GM10248 (cell line): ENCODE measurements at regions of chr12 and their contacts with region 1.

Region 1: GRCh38 chr12:110431957-110432587 is 18.1 kb downstream of the ARPC3 start:
- DNase-seq: no peak
- CTCF ChIP-seq: no peak

Region 2: DNA sequence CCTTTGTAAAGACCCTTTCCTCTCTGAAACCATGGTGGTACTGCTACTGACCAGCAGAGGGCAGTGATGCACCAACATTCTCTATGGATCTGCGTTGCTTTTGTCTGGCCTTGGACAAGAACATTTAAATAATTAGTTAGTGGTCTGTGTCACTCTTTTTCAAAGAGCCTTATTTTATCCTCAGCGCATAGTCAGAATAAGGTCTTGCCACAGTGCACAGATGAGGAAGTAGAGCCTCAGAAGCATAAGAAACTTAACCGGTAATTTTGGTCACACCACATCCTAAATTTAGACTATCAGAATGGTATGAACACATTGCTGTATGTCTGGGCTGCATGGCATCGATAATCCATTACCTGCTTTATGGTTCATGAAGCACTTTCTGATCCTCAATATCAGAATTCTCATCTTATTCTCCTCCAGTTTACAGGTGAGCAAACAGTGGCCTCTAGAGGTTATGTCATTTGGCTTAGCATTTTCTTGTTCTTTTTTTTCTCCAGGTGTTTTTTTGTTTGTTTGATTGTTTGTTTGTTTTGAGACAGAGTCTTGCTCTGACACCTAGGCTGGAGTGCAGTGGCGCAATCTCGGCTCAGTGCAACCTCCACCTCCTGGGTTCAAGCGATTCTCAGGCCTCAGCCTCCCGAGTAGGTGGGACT is 331.6 kb before region 1 on chr12:
- CTCF ChIA-PET with region 1: interaction called, 38 read pairs
- POLR2A ChIA-PET with region 1: no interaction called
- DNase-seq: peak; percentile 81
- CTCF ChIP-seq: peak; percentile 94

Region 3: GRCh38 chr12:110316861-110317260 is 115.2 kb before region 1 on chr12:
- CTCF ChIA-PET with region 1: interaction called, 11 read pairs
- POLR2A ChIA-PET with region 1: no interaction called
- DNase-seq: no peak
- CTCF ChIP-seq: no peak

Region 4: GRCh38 chr12:110349531-110350151 is 82.4 kb before region 1 on chr12:
- CTCF ChIA-PET with region 1: interaction called, 20 read pairs
- POLR2A ChIA-PET with region 1: interaction called, 12 read pairs
- DNase-seq: peak; percentile 41
- CTCF ChIP-seq: no peak

Region 5: GRCh38 chr12:110357548-110357947 is 74.5 kb before region 1 on chr12:
- CTCF ChIA-PET with region 1: interaction called, 20 read pairs
- POLR2A ChIA-PET with region 1: interaction called, 12 read pairs
- DNase-seq: no peak
- CTCF ChIP-seq: no peak

Region 6: DNA sequence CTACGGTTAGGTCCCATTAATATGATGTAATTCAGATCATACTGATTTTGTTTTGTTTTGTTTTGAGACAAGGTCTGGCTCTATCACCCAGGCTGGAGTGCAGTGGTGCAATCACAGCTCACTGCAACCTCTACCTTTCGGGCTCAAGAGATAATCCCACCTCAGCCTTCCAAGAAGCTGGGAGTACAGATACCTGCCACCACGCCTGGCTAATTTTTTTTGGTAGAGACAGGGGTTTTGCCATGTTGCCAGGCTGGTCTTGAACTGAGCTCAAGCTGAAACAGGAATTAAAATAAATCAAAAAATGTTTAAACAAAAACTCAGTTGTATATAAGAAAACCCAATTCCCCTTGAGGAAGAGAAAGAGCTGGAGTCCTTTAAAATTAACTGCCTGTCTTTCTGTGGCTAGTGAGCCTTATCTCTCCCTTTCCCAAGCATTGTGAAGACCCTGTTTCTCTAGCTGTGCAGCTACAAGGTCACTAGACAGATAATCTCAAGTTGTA is 10.9 kb before region 1 on chr12:
- CTCF ChIA-PET with region 1: interaction called, 36 read pairs
- POLR2A ChIA-PET with region 1: interaction called, 14 read pairs
- DNase-seq: no peak
- CTCF ChIP-seq: no peak

Region 7: GRCh38 chr12:110444455-110444854 is 12.4 kb after region 1 on chr12:
- CTCF ChIA-PET with region 1: interaction called, 30 read pairs
- POLR2A ChIA-PET with region 1: interaction called, 4 read pairs
- DNase-seq: no peak
- CTCF ChIP-seq: no peak